ENCODE measurements at regions of chr18 and their contacts with region 1.

Region 1: GRCh38 chr18:2932247-2933181 is 80.4 kb downstream of the LPIN2 start:
- DNase-seq: peak; percentile 50
- ATAC-seq: peak; percentile 60
- H3K4me3 Mint-ChIP-seq: no peak overlapping the region
- H3K27ac Mint-ChIP-seq: peak overlapping the region; percentile 81
- H3K4me1 Mint-ChIP-seq: peaks cover 41% of the 10 kb centered on the region
- H3K27me3 Mint-ChIP-seq: no peaks in the 10 kb centered on the region

Region 2: DNA sequence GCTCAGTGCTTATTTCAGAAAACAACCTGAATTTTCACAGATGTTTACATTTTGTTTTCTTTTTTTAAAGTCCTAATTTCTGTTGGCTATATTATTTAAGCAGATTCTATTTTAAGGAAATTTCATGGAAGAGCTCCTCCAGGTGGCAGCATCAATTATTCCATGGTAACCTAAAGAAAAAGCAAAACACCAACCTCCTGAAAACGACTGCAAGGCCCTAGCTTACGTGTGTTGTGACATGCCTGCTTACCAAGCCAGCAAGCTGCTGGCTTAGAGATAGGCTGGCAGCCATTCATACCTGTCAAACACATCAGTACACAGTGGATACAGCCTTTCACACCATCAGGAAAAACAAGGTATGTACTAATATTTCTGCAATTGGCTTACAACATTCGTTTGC is 15.5 kb after region 1 on chr18:
- CTCF ChIA-PET with region 1: interaction called, 20 read pairs
- POLR2A ChIA-PET with region 1: no interaction called
- intact Hi-C with region 1: no loop called
- DNase-seq: no peak
- ATAC-seq: peak; percentile 70
- H3K4me3 Mint-ChIP-seq: no peak overlapping the region
- H3K27ac Mint-ChIP-seq: no peak overlapping the region
- H3K4me1 Mint-ChIP-seq: peaks cover 53% of the 10 kb centered on the region
- H3K27me3 Mint-ChIP-seq: no peaks in the 10 kb centered on the region

Region 3: GRCh38 chr18:3151399-3152264 is 219.1 kb after region 1 on chr18:
- CTCF ChIA-PET with region 1: interaction called, 8 read pairs
- POLR2A ChIA-PET with region 1: no interaction called
- intact Hi-C with region 1: loop called (anchors 1 kb)
- DNase-seq: no peak
- ATAC-seq: no peak
- H3K4me3 Mint-ChIP-seq: no peak overlapping the region
- H3K27ac Mint-ChIP-seq: no peak overlapping the region
- H3K4me1 Mint-ChIP-seq: peaks cover 4% of the 10 kb centered on the region
- H3K27me3 Mint-ChIP-seq: no peaks in the 10 kb centered on the region